Activated T-helper 2 cell treated with anti-CD3 and anti-CD28 coated beads, Interferon-gamma antibody, Interleukin-2, Interleukin-4, amounts not matched to agents 10 μg/mL and 5 μg/mL and 100 μg/mL, durations not matched to agents 14 hours and 24 hours and 36 hours (primary cell): ENCODE measurements at regions of chr6 and their contacts with region 1.

Region 1: DNA sequence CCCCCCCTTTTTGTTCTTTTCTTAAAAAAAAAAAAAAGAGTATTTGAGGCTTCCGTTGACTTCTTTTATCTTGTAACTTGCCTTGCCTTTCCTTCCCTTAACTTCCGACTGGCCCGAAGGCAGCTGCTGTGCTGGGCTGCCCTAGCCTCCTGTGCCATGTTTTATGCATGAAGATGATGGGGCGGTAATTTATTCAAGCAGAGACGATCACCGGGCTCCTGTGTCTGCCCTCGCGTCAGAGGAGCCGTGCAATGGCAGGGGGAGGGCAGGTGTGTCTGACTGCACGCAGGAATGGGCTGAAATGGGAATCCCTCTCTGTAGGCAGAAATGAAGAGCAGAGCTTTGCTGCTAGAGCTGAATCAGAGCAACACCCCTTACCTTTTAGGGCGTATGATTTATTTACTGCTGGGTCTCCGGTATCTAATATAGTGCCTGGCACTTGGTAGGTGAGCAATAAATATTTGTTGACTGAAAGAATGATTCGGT is 106.3 kb upstream of the RIPOR2 start:
- DNase-seq: peak; percentile 25
- H3K4me3 Mint-ChIP-seq: peak overlapping the region; percentile 88
- H3K27ac Mint-ChIP-seq: peak overlapping the region; percentile 86
- H3K4me1 Mint-ChIP-seq: peaks cover 51% of the 10 kb centered on the region
- H3K27me3 Mint-ChIP-seq: no peaks in the 10 kb centered on the region

Region 2: GRCh38 chr6:25053875-25054371 is 11.8 kb after region 1 on chr6:
- intact Hi-C with region 1: loop called (anchors 1 kb)
- DNase-seq: no peak
- H3K4me3 Mint-ChIP-seq: no peak overlapping the region
- H3K27ac Mint-ChIP-seq: peak overlapping the region; percentile 73
- H3K4me1 Mint-ChIP-seq: peaks cover 69% of the 10 kb centered on the region
- H3K27me3 Mint-ChIP-seq: no peaks in the 10 kb centered on the region